ENCODE measurements at regions of chr21 and their contacts with region 1.

Region 1: GRCh38 chr21:15483138-15483780 is 246.5 kb upstream of the USP25 start:
- DNase-seq: peak; percentile 62 to 68 (median 65)
- H3K4me3 ChIP-seq: no peak overlapping the region
- H3K4me3 Mint-ChIP-seq: peak overlapping the region in 3 of 8 donors; percentile 4 to 32 (median 24)
- H3K27ac ChIP-seq: no peak overlapping the region
- H3K27ac Mint-ChIP-seq: peak overlapping the region in 1 of 7 donors; percentile 61
- H3K4me1 ChIP-seq: peaks cover 5% of the 10 kb centered on the region
- H3K4me1 Mint-ChIP-seq: peaks cover 10 to 21% (median 15%) of the 10 kb centered on the region in 4 donors
- H3K27me3 ChIP-seq: no peaks in the 10 kb centered on the region
- H3K27me3 Mint-ChIP-seq: no peaks in the 10 kb centered on the region

Region 2: DNA sequence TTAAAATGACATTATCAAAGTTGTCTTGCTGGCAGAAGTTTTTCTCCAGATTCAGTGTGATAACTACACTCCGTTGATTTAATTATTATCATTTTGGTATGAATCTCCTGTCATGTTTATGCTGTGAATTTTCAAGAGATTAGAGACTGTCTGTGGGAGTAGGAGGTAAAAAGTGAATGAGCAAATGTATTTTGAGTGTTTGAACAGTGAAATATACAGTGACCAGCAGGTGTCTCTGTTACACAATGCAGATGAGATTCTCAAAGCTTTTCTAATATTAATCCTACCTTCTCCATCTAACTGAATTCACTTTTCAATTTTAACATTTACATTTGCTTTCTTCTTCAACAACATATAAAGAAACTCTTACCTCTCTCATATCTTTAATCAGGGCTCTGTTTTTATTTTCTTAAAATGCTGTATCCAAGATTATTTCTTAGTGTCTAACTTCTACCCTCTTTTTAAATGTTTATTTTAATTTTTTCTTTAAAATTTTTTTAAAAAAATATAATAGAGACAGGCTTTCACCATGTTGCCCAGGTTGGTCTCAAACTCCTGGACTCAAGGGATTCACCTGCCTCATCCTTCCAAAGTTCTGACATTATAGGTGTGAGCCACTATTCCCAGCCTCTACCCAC is 1079.5 kb before region 1 on chr21:
- CTCF ChIA-PET with region 1: interaction called, 6 read pairs
- POLR2A ChIA-PET with region 1: no interaction called
- intact Hi-C with region 1: loop called (anchors 1 kb)
- DNase-seq: peak in 4 of 5 donors; percentile 32 to 45 (median 38)
- H3K4me3 ChIP-seq: no peak overlapping the region
- H3K4me3 Mint-ChIP-seq: no peak overlapping the region
- H3K27ac ChIP-seq: no peak overlapping the region
- H3K27ac Mint-ChIP-seq: no peak overlapping the region
- H3K4me1 ChIP-seq: no peaks in the 10 kb centered on the region
- H3K4me1 Mint-ChIP-seq: peaks cover 0 to 1% (median 0%) of the 10 kb centered on the region in 4 donors
- H3K27me3 ChIP-seq: no peaks in the 10 kb centered on the region
- H3K27me3 Mint-ChIP-seq: peaks cover 0 to 3% of the 10 kb centered on the region in 2 donors

Region 3: GRCh38 chr21:15064576-15065391 is 418.5 kb before region 1 on chr21 and contains the start of gene NRIP1:
- CTCF ChIA-PET with region 1: interaction called, 3 read pairs
- POLR2A ChIA-PET with region 1: interaction called, 3 read pairs
- intact Hi-C with region 1: loop called (anchors 1 kb)
- DNase-seq: peak; percentile 79 to 86 (median 85)
- H3K4me3 ChIP-seq: peak within 1 kb of the TSS; percentile 66 to 72
- H3K4me3 Mint-ChIP-seq: peak within 1 kb of the TSS; percentile 92 to 97 (median 96)
- H3K27ac ChIP-seq: peak within 1 kb of the TSS; percentile 68
- H3K27ac Mint-ChIP-seq: peak within 1 kb of the TSS; percentile 95 to 99 (median 97)
- H3K4me1 ChIP-seq: peaks cover 27% of the 10 kb centered on the region
- H3K4me1 Mint-ChIP-seq: peaks cover 22 to 53% (median 38%) of the 10 kb centered on the region in 4 donors
- H3K27me3 ChIP-seq: no peaks in the 10 kb centered on the region
- H3K27me3 Mint-ChIP-seq: peaks cover 0 to 18% of the 10 kb centered on the region in 2 donors
- total RNA-seq, gene NRIP1: 22.8 to 24.5 TPM

Region 4: GRCh38 chr21:15493646-15494045 is 10.4 kb after region 1 on chr21:
- CTCF ChIA-PET with region 1: interaction called, 13 read pairs
- POLR2A ChIA-PET with region 1: no interaction called
- intact Hi-C with region 1: no loop called
- DNase-seq: no peak
- H3K4me3 ChIP-seq: no peak overlapping the region
- H3K4me3 Mint-ChIP-seq: no peak overlapping the region
- H3K27ac ChIP-seq: no peak overlapping the region
- H3K27ac Mint-ChIP-seq: no peak overlapping the region
- H3K4me1 ChIP-seq: no peaks in the 10 kb centered on the region
- H3K4me1 Mint-ChIP-seq: no peaks in the 10 kb centered on the region
- H3K27me3 ChIP-seq: no peaks in the 10 kb centered on the region
- H3K27me3 Mint-ChIP-seq: no peaks in the 10 kb centered on the region

Region 5: DNA sequence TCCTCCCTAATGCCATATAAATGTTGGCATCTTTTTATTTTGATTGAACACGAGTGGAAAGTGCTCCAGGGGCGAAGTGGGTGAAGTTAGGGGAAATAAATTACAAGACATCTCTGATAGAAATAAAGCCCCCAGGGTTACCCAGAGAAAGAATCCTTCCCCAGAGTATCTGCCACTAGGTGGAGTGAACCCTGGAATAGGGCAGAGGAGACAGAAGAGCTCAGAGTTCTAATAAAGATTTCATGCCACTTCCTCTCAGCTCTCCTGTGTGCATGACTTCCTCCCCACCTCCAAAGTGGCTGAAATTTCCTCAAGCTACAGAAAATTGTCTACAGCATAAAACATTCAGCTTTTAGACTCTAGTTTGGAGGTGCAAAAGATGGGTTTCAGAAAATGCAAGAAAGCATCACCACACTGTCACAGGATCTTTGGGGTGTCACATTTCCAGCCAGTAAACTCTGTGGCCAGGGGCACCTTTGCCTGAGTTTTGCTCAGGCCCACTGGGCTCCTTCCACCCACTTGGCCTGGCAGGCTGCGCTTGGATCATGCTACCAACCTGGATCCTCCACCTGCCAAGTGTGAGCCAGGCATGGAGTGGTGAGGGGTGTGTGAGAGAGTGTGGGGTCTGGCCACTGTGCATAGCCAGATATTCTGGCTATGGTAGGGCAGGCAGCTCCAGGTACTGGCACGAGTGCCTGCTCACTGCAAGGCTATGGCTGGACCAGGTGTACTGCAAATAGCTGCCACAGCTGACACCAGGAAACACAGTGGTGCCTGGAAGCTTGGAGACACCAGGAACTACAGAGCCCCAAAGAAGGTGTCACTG is 37.8 kb after region 1 on chr21:
- CTCF ChIA-PET with region 1: interaction called, 22 read pairs
- POLR2A ChIA-PET with region 1: no interaction called
- intact Hi-C with region 1: no loop called
- DNase-seq: peak in 4 of 5 donors; percentile 3 to 21 (median 15)
- H3K4me3 ChIP-seq: no peak overlapping the region
- H3K4me3 Mint-ChIP-seq: peak overlapping the region in 2 of 8 donors; percentile 45 to 58
- H3K27ac ChIP-seq: no peak overlapping the region
- H3K27ac Mint-ChIP-seq: peak overlapping the region in 3 of 7 donors; percentile 17 to 56 (median 22)
- H3K4me1 ChIP-seq: peaks cover 18% of the 10 kb centered on the region
- H3K4me1 Mint-ChIP-seq: peaks cover 10 to 22% (median 16%) of the 10 kb centered on the region in 4 donors
- H3K27me3 ChIP-seq: no peaks in the 10 kb centered on the region
- H3K27me3 Mint-ChIP-seq: no peaks in the 10 kb centered on the region

Region 6: DNA sequence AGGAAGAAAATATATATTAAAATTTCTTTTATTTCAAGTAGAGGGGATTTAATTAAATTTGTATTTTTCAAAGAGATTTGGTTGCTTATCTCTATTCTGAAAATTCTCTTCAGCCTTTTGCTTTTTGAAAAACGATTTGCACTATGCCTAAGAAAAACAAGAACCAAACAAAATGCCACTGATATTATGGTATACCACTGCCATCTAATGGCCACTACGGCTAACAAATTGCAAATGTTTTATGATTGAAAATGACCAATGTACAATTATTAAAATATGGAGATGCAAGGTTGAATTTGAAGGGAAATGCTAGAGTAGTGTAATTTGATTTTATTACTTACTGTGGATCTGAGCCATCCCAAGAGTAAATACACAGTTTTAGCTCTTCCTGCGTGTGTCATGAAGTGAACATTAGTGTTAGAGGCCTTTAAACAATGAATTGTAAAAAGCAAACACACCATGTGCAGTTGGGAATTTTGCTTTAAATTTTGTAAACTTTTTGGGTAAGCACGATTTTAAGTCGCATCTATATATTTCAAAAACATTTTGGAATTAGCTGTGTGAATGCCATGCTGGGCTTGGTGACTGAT is 109.1 kb after region 1 on chr21:
- CTCF ChIA-PET with region 1: interaction called, 6 read pairs
- POLR2A ChIA-PET with region 1: no interaction called
- intact Hi-C with region 1: loop called (anchors 2 kb)
- DNase-seq: peak in 4 of 5 donors; percentile 25 to 37 (median 32)
- H3K4me3 ChIP-seq: no peak overlapping the region
- H3K4me3 Mint-ChIP-seq: no peak overlapping the region
- H3K27ac ChIP-seq: no peak overlapping the region
- H3K27ac Mint-ChIP-seq: no peak overlapping the region
- H3K4me1 ChIP-seq: no peaks in the 10 kb centered on the region
- H3K4me1 Mint-ChIP-seq: no peaks in the 10 kb centered on the region
- H3K27me3 ChIP-seq: no peaks in the 10 kb centered on the region
- H3K27me3 Mint-ChIP-seq: peaks cover 6% of the 10 kb centered on the region in 2 donors

Measured in CD4-positive, alpha-beta memory T cell (primary cell).